ENCODE measurements at regions of chr12 and their contacts with region 1.

Region 1: DNA sequence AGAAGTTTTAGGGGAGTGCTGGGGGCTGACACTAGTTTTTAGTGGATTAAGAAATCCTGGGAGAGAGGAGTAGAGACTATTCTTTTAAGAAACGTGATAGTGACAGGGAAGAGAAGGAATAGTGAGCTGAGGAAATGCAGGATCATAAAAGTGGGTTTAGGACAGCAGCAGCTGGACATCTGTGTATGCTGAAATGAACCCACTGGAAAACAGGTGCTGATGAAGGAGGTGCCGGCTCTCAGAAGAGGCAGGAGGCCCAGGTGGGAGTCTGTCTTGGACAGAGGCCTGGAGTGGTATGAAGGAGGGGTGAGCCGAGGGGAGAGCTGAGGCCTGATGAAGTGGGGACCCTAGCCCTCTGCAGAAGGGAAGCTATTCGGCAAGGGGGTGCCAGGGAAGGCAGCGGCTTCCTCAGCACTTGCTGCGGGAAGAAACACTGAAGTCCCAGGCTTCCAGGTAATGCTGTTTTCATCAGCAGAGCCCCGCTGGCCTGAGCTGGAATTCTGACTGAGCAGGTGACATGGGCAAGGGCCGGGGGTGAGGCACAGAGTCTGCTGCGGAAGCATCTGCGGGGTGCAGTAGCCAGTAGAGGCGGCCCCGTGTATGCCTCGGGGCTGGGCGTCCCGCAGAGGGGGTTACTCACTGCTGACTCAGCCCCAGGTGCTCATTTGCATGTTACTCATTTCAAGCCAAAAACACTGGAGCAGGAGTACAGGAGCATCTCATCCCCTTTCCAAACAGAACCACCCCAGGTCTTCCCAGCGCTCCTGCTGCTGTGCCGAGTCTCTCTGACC is 89.7 kb downstream of the TMCC3 start:
- DNase-seq: peak; percentile 35
- ATAC-seq: peak; percentile 97
- H3K4me3 ChIP-seq: peak overlapping the region; percentile 9 to 34; a peak in 3 of 4 replicates
- H3K27ac ChIP-seq: no peak overlapping the region
- H3K4me1 ChIP-seq: peaks cover 9 to 33% of the 10 kb centered on the region in 2 experiments
- H3K27me3 ChIP-seq: no peaks in the 10 kb centered on the region
- CTCF ChIP-seq: no peak
- POLR2A ChIP-seq: no peak
- RAD21 ChIP-seq: no peak

Region 2: DNA sequence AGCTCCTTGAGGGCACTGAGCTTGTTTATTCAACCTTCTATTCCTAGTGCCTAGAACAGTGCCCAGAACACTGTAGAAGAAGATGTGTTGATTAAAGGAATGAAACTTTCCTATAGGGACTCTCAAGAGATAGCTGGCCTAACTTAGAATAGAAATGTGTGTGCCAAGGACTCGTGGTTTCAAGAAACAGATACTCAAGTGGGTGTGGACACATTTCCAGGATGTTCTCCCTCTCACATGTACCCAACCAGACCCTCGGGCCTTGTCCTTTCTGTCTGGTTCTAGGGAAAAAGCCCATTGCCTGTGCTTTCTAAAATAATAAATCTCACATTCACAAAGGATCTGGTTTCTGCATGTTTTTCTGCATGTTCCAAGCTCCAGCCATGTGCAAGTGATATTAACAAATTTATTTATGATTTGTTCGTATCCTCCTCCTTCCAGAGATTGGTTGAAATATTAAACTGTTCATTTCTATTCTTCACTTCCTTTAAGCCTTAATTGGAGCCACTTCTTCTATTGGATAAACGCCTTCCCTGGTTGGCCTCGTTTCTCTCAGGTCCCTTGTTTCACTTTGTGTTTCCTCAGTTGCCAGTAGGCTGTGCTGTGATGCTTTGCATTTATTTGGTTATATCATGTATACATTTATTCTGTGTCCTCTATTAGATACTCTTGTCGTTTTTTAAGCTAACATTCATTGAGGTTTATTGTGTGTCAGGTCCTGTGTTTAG is 793.7 kb before region 1 on chr12:
- CTCF ChIA-PET with region 1: no interaction called
- POLR2A ChIA-PET with region 1: no interaction called
- RAD21 ChIA-PET with region 1: no interaction called
- intact Hi-C with region 1: no loop called
- DNase-seq: no peak
- ATAC-seq: peak; percentile 71
- H3K4me3 ChIP-seq: no peak overlapping the region
- H3K27ac ChIP-seq: no peak overlapping the region
- H3K4me1 ChIP-seq: peaks cover 0 to 8% of the 10 kb centered on the region in 2 experiments; a peak in 1 of 4 replicates
- H3K27me3 ChIP-seq: no peaks in the 10 kb centered on the region
- CTCF ChIP-seq: peak; percentile 42 to 63 (median 53); a peak in 5 of 6 replicates
- POLR2A ChIP-seq: no peak
- RAD21 ChIP-seq: peak; percentile 78

Region 3: DNA sequence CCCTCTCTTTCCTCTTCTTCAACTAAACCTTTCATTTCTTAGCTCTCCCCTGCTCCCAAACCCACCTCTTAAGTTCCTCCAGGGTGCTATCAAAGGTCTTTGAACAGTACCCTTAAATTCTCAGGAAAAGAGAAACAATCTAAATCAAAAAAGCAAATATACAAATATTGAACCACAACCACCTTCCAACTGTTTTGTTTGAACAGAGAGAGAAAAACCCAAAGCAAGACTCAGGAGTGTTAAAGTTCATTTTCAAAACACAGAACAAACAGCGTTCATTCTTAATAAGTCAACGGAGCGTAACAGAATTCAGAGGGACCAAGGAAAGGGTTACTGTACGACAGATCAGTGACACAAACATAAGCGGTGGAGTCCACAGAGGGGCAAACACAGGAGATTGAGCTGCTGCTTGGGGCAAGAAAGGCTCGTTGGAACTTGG is 369.6 kb after region 1 on chr12:
- CTCF ChIA-PET with region 1: no interaction called
- POLR2A ChIA-PET with region 1: no interaction called
- RAD21 ChIA-PET with region 1: no interaction called
- intact Hi-C with region 1: no loop called
- DNase-seq: no peak
- ATAC-seq: no peak
- H3K4me3 ChIP-seq: no peak overlapping the region
- H3K27ac ChIP-seq: no peak overlapping the region
- H3K4me1 ChIP-seq: no peaks in the 10 kb centered on the region
- H3K27me3 ChIP-seq: no peaks in the 10 kb centered on the region
- CTCF ChIP-seq: no peak
- POLR2A ChIP-seq: no peak
- RAD21 ChIP-seq: no peak

Region 4: GRCh38 chr12:95538656-95539055 is 978.0 kb after region 1 on chr12:
- CTCF ChIA-PET with region 1: no interaction called
- POLR2A ChIA-PET with region 1: no interaction called
- RAD21 ChIA-PET with region 1: no interaction called
- intact Hi-C with region 1: loop called (anchors 5 kb)
- DNase-seq: no peak
- ATAC-seq: no peak
- H3K4me3 ChIP-seq: no peak overlapping the region
- H3K27ac ChIP-seq: no peak overlapping the region
- H3K4me1 ChIP-seq: peaks cover 0 to 5% of the 10 kb centered on the region in 2 experiments; a peak in 1 of 4 replicates
- H3K27me3 ChIP-seq: no peaks in the 10 kb centered on the region
- CTCF ChIP-seq: no peak
- POLR2A ChIP-seq: no peak
- RAD21 ChIP-seq: no peak

Measured in HCT116 (cell line).